Activated CD8-positive, alpha-beta T cell treated with anti-CD3 and anti-CD28 coated beads, Interleukin-2, amount 10 ng/mL, durations not matched to agents 7 days and 5 days (primary cell): ENCODE measurements at regions of chr12 and their contacts with region 1.

Region 1: DNA sequence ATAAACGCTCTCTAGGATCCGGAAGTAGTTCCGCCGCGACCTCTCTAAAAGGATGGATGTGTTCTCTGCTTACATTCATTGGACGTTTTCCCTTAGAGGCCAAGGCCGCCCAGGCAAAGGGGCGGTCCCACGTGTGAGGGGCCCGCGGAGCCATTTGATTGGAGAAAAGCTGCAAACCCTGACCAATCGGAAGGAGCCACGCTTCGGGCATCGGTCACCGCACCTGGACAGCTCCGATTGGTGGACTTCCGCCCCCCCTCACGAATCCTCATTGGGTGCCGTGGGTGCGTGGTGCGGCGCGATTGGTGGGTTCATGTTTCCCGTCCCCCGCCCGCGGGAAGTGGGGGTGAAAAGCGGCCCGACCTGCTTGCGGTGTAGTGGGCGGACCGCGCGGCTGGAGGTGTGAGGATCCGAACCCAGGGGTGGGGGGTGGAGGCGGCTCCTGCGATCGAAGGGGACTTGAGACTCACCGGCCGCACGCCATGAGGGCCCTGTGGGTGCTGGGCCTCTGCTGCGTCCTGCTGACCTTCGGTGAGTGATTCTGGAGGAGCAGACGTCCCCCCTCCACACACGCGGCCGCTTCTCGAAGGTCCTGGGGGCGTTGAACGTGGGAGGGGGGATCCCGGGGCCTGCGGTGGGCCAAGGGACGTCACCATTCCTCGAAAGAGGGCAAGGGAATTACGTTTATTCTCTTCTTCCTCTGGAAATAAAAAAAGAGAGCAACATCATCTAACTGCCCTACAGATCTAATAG is at the start of gene HSP90B1:
- DNase-seq: peak; percentile 100
- ATAC-seq: peak; percentile 82
- H3K4me3 Mint-ChIP-seq: peak within 1 kb of the TSS; percentile 82
- H3K27ac Mint-ChIP-seq: peak within 1 kb of the TSS; percentile 99
- H3K4me1 Mint-ChIP-seq: peaks cover 52% of the 10 kb centered on the region
- H3K27me3 Mint-ChIP-seq: peaks cover 2% of the 10 kb centered on the region
- total RNA-seq, gene HSP90B1: 336 to 343 TPM

Region 2: GRCh38 chr12:103884316-103884715 is 45.9 kb before region 1 on chr12:
- CTCF ChIA-PET with region 1: interaction called, 26 read pairs
- POLR2A ChIA-PET with region 1: interaction called, 8 read pairs
- DNase-seq: peak; percentile 50
- ATAC-seq: no peak
- H3K4me3 Mint-ChIP-seq: no peak overlapping the region
- H3K27ac Mint-ChIP-seq: no peak overlapping the region
- H3K4me1 Mint-ChIP-seq: peaks cover 30% of the 10 kb centered on the region
- H3K27me3 Mint-ChIP-seq: no peaks in the 10 kb centered on the region

Region 3: DNA sequence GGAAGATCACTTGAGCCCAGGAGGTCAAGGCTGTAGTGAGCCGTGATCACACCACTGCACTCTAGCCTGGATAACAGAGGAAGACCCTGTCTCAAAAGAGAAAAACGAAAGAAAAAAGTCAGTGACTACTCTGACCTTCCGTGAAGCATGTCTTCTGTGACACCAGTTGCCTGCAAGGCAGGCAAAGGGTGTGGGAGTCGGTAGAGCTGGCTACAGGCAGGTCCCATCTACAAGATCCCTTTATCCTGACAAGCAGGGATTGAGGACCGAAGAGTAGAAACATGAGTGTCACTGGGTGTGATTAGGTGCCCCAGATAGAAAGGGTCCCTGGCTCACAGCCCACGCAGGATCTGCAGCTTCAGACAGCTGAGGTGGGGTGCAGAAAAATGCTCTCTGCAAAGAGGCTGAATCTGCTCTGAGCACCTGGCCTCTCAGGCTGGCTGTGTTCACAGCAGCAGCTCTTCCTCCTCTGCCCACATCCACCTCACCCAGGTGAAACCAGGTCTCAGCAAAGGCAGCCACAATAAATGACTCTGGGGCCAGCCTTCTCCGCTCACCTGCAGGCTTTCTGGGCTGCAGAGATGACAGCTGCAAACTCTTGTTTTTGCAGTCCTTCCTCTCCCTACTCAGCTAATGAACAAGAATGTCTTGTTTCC is 28.6 kb before region 1 on chr12:
- CTCF ChIA-PET with region 1: interaction called, 11 read pairs
- POLR2A ChIA-PET with region 1: interaction called, 17 read pairs
- DNase-seq: peak; percentile 47
- ATAC-seq: peak; percentile 76
- H3K4me3 Mint-ChIP-seq: peak overlapping the region; percentile 17
- H3K27ac Mint-ChIP-seq: peak overlapping the region; percentile 14
- H3K4me1 Mint-ChIP-seq: peaks cover 25% of the 10 kb centered on the region
- H3K27me3 Mint-ChIP-seq: no peaks in the 10 kb centered on the region

Region 4: DNA sequence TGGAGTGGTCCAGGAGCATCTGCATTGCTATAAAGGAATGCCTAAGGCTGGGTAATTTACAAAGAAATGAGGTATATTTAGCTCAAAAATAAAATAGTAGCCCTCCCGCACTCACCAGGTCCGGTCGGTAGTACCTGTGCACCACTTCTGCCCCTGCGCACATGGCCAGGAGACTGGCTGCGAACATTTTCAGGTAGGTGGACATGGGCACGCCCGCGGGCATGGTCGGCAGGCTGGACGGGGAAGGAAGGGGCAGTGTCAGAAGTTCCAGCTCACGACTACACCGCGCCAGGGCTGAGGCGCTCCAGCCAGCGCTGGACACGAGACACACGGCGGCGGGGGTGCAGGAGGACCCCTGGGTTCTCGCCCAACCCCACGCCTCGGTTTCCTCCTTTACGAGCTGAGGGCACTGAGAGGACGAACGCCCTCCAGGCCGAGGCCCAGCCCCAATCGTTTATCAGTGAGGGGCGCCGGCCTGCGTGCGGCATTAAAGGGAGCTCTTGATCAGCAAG is 26.4 kb after region 1 on chr12:
- CTCF ChIA-PET with region 1: interaction called, 7 read pairs
- POLR2A ChIA-PET with region 1: interaction called, 23 read pairs
- DNase-seq: peak; percentile 28
- ATAC-seq: no peak
- H3K4me3 Mint-ChIP-seq: peak overlapping the region; percentile 98
- H3K27ac Mint-ChIP-seq: peak overlapping the region; percentile 98
- H3K4me1 Mint-ChIP-seq: peaks cover 41% of the 10 kb centered on the region
- H3K27me3 Mint-ChIP-seq: no peaks in the 10 kb centered on the region

Region 5: GRCh38 chr12:103965590-103966504 is 35.6 kb after region 1 on chr12 and contains the start of gene TDG:
- CTCF ChIA-PET with region 1: interaction called, 13 read pairs
- POLR2A ChIA-PET with region 1: interaction called, 60 read pairs
- DNase-seq: peak; percentile 98
- ATAC-seq: peak; percentile 96
- H3K4me3 Mint-ChIP-seq: peak within 1 kb of the TSS; percentile 95
- H3K27ac Mint-ChIP-seq: peak within 1 kb of the TSS; percentile 96
- H3K4me1 Mint-ChIP-seq: peaks cover 49% of the 10 kb centered on the region
- H3K27me3 Mint-ChIP-seq: no peaks in the 10 kb centered on the region
- total RNA-seq, gene TDG: 33.5 to 37.7 TPM